ENCODE measurements at regions of chr1 and their contacts with region 1.

Region 1: GRCh38 chr1:183804881-183805841 is at the start of gene RGL1:
- DNase-seq: peak; percentile 81
- ATAC-seq: peak; percentile 82 to 92 (median 88)
- H3K4me3 ChIP-seq: peak within 1 kb of the TSS; percentile 71
- H3K27ac ChIP-seq: peak within 1 kb of the TSS; percentile 70
- H3K4me1 ChIP-seq: no peaks in the 10 kb centered on the region
- H3K27me3 ChIP-seq: no peaks in the 10 kb centered on the region
- CTCF ChIP-seq: no peak
- total RNA-seq, gene RGL1: 3.9 to 6.8 (median 5.2) TPM

Region 2: DNA sequence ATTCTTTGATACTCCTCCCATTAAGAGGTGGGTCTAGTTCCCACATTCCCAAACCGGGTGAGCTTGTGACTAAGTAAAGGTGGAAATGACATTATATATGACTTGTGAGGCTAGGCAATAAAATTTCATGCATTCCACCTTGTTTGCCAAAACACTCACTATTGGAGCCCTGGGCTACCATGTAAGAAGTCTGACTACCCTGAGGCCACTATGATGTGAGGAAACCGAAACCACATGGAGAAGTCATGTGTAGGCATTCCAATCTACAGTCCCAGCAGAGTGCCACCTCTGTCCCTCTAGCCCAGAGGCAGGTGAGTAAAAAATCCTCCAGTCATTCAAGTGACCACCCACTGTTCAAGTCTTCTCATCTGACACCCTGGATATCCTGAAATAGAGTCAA is 350.8 kb before region 1 on chr1:
- intact Hi-C with region 1: no loop called
- DNase-seq: no peak
- ATAC-seq: no peak
- H3K4me3 ChIP-seq: no peak overlapping the region
- H3K27ac ChIP-seq: no peak overlapping the region
- H3K4me1 ChIP-seq: no peaks in the 10 kb centered on the region
- H3K27me3 ChIP-seq: peaks cover 0 to 4% (median 2%) of the 10 kb centered on the region in 3 donors
- CTCF ChIP-seq: no peak

Region 3: DNA sequence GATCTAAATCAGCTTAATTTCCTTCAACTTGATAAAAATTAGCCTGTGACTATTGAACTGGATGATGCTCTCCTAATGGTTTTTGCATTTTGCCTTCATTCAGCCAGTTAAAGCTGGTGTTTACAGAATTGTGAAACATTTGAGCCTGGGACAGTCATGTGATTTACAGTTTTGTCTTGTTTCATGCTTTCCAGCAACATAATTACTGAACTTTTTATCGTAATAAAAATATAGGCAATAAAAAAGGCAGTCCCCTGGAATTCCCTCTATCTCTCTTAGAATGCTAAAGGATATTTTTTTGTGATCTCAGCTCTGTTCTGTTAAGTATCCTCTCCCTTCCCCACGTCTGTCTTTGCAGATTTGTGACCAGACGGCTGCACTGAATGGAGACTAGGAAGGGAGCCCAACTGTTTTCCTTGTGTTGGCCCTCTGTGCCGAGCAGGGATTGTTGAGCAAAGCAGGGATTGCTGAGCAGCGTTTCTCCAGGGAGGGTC is 70.6 kb before region 1 on chr1:
- intact Hi-C with region 1: loop called in 1 of 2 experiments (anchors 10 kb)
- DNase-seq: peak in 1 of 2 donors; percentile 16
- ATAC-seq: peak in 2 of 4 donors; percentile 42 to 56
- H3K4me3 ChIP-seq: no peak overlapping the region
- H3K27ac ChIP-seq: peak overlapping the region; percentile 3
- H3K4me1 ChIP-seq: no peaks in the 10 kb centered on the region
- H3K27me3 ChIP-seq: no peaks in the 10 kb centered on the region
- CTCF ChIP-seq: no peak

Region 4: GRCh38 chr1:183757061-183757460 is 48.1 kb before region 1 on chr1:
- intact Hi-C with region 1: no loop called
- DNase-seq: no peak
- ATAC-seq: no peak
- H3K4me3 ChIP-seq: no peak overlapping the region
- H3K27ac ChIP-seq: no peak overlapping the region
- H3K4me1 ChIP-seq: no peaks in the 10 kb centered on the region
- H3K27me3 ChIP-seq: no peaks in the 10 kb centered on the region
- CTCF ChIP-seq: no peak

Region 5: DNA sequence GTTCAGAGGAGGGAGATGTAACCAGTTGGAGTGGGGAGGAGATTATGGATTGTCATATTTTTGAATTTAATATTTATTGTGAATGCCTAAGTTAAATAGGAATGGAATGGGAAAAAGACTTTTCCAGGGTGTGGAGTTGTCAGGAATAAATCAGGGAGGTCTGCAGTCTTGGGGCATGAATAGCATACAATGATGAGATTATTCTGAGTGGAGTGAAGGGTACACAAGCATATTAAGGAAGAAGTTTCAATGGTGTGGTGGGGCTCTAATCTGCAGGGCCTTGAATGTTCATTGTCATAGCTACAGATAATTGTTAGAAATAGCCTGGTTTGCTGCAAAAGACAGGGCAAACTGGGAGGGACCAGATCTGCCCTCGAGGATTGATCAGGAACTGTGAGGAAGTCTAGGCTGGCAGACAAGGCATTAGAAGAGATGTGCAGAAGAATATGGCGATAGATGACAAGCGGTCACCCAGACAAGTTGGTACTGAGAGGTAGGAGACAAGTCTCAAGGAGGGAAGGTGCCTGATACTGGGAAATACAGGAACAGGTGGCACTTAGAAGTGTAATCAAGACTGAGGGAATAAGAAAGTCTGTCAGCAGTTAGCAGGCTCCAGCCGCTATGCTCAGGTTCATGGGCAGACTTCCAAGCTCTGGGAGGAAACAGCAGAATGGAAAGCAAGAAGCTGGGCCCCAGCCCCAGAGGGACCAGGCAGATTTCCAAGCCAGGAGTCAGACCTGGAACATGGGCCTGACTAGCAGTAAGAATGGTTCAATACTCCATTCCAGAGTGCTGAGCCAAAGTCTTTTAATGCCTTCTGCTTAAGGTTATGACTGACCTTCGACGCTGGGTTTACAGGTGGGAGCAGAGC is 21.2 kb before region 1 on chr1:
- intact Hi-C with region 1: loop called in 1 of 2 experiments (anchors 2 kb)
- DNase-seq: peak; percentile 55 to 66
- ATAC-seq: peak; percentile 66 to 93 (median 77)
- H3K4me3 ChIP-seq: no peak overlapping the region
- H3K27ac ChIP-seq: peak overlapping the region; percentile 37
- H3K4me1 ChIP-seq: peaks cover 16% of the 10 kb centered on the region
- H3K27me3 ChIP-seq: no peaks in the 10 kb centered on the region
- CTCF ChIP-seq: no peak

Region 6: GRCh38 chr1:183896466-183897048 is 91.4 kb after region 1 on chr1:
- intact Hi-C with region 1: loop called in 1 of 2 experiments (anchors 5 kb)
- DNase-seq: no peak
- ATAC-seq: no peak
- H3K4me3 ChIP-seq: no peak overlapping the region
- H3K27ac ChIP-seq: no peak overlapping the region
- H3K4me1 ChIP-seq: peaks cover 30% of the 10 kb centered on the region
- H3K27me3 ChIP-seq: no peaks in the 10 kb centered on the region
- CTCF ChIP-seq: no peak